Heart right ventricle (tissue), 16 donors: ENCODE measurements at regions of chr3 and their contacts with region 1.

Region 1: DNA sequence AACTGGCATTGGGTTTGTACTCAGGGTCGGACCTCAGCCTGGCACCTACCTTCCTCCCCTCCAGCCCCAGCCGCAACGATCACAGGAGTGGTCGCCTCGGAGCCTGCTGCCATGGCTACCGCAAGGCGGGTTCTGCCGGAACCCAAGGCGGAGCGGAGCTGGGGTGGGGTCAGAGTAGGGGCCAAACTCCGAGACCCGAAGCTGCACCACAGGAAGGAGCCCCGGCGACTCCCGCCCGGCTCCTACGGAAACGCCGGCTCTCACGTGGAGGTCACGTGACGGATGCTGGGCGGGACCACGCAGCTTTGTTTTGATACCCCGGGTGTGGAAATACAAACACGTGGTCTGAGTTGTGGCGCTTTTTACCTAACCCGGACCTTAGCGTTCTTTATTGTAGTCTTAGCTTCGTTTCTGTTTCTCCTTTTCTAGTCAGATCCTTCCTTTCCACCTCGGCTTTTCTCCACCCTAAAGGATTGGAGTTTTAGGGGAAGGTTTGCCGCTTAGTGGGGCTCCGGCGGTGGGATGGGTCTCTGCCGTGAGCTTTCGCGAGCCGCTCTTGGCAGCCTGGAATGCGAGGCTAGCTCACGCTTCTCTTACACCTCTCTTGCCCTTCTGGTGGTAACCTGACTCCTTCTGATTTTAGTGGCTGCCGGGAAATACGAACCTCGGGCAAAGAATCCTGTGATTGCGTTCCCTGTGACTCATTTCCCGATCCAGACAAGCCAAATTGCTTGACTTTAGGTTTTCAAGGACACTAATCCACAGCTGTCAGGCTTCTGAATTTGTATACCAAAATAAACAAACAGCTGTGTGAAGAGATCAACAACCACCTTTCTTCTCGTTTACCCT is at the start of gene HSPBAP1:
- DNase-seq: peak; percentile 91 to 94
- ATAC-seq: peak; percentile 76 to 95 (median 88)
- H3K4me3 ChIP-seq: peak within 1 kb of the TSS; percentile 47 to 96 (median 84)
- H3K27ac ChIP-seq: peak within 1 kb of the TSS; percentile 83 to 98 (median 95)
- H3K4me1 ChIP-seq: peaks cover 0 to 63% (median 19%) of the 10 kb centered on the region in 9 donors
- H3K27me3 ChIP-seq: no peaks in the 10 kb centered on the region
- CTCF ChIP-seq: no peak
- total RNA-seq, gene HSPBAP1: 2.7 to 6.8 (median 4.0) TPM

Region 2: GRCh38 chr3:122392868-122393844 is 400.6 kb before region 1 on chr3:
- intact Hi-C with region 1: loop called in 1 of 10 experiments (anchors 10 kb)
- DNase-seq: no peak
- ATAC-seq: no peak
- H3K4me3 ChIP-seq: no peak overlapping the region
- H3K27ac ChIP-seq: peak overlapping the region in 2 of 10 donors; percentile 5 to 33
- H3K4me1 ChIP-seq: peaks cover 0 to 49% (median 15%) of the 10 kb centered on the region in 9 donors
- H3K27me3 ChIP-seq: no peaks in the 10 kb centered on the region
- CTCF ChIP-seq: peak; percentile 51 to 86 (median 71)

Region 3: DNA sequence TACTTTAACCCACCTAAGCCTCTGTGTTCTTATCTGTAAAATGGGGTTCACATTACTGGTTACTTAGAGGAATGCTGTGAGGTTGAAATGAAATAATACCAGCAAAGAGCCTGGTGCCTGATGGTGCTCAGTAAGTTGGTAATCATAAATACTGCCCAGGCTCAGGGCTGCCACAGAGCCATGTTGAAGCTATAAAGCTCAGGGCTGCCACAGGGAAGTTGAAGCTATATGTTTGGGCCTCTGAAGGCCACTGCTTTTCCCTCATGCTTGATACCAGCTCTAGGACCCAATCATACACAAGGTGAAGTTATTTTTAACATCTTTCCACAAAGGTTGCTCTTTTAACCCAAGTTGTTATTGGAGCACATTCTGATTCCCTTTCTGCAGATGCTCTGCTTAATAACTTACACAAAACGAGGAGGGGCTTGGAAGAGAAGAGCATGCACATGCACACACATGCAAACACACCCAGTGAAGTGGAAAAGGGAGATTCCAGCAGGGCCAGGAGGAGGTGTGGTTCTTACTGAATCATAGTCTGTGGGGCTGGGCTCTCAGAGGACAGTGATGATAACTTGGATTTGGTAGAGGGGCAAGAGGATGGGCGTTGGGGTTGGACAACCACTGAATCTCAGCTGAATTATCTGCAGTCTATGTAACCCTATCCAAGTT is 95.7 kb before region 1 on chr3:
- intact Hi-C with region 1: no loop called
- DNase-seq: no peak
- ATAC-seq: no peak
- H3K4me3 ChIP-seq: no peak overlapping the region
- H3K27ac ChIP-seq: no peak overlapping the region
- H3K4me1 ChIP-seq: no peaks in the 10 kb centered on the region
- H3K27me3 ChIP-seq: no peaks in the 10 kb centered on the region
- CTCF ChIP-seq: no peak

Region 4: DNA sequence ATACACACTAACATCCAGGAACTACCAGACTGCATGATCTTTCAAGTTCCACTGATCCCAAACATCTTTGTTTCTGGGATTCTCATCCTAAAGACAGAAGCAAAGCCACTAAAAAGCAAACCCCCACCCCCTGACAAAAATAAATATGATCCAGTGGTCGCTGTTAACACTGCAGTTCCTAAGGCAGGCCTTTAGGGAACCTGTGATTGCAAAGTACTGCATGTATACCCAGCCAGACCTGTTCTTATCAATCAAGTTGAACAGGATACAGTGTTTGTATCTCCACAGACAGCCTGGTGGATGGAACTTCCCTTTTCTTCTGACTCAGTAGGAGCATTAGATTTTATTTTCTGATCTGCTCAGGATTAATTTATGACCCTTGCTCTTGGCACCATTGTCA is 1519.4 kb after region 1 on chr3:
- intact Hi-C with region 1: loop called in 1 of 10 experiments (anchors 5 kb)
- DNase-seq: no peak
- ATAC-seq: no peak
- H3K4me3 ChIP-seq: no peak overlapping the region
- H3K27ac ChIP-seq: no peak overlapping the region
- H3K4me1 ChIP-seq: peaks cover 0 to 4% (median 0%) of the 10 kb centered on the region in 9 donors
- H3K27me3 ChIP-seq: no peaks in the 10 kb centered on the region
- CTCF ChIP-seq: no peak